CD4-positive, alpha-beta memory T cell (primary cell): ENCODE measurements at regions of chr7 and their contacts with region 1.

Region 1: DNA sequence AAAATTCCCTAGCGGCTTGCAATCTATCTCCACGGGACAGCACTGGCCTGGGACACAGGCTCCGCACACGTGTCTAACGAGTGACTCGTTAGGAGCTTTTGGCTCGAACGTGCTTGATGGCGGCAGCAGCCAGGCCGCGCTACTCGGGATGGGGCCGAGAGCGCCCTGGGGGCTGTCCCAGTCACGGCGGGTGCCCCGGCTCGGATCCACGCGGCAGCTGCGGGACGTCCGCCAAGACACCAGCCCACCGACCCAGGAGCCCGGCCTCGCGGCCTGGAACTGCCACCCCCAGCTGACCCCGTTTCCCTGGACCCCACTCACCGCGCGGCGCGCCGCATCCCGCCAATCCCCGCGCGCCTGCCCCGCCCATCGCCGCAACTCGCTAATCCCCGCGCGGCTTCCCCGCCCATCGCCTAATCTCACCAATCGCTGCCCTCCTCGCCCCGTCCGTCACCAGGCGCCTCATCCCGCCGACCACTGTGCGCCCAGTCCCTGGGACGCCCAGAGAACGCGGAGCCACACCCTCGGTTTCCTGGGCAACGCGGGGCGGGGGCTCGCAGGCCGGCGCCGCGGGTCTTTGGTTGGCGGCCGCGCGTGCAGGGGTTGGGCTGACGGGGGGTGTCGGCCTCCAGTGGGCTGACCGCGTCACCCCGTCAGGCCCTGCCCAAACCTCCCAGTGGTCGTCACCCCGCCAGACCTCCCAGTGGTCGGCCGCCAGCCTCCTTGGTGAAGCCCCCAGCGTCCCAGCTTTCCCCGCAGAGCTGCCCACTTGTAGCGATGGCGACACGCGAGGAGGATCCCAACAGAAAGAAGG is at the start of gene POLD2:
- DNase-seq: peak; percentile 95 to 97 (median 96)
- H3K4me3 ChIP-seq: peak within 1 kb of the TSS; percentile 72 to 78
- H3K4me3 Mint-ChIP-seq: peak within 1 kb of the TSS; percentile 87 to 95 (median 93)
- H3K27ac ChIP-seq: peak within 1 kb of the TSS; percentile 76
- H3K27ac Mint-ChIP-seq: peak within 1 kb of the TSS; percentile 90 to 97 (median 96)
- H3K4me1 ChIP-seq: peaks cover 22% of the 10 kb centered on the region
- H3K4me1 Mint-ChIP-seq: peaks cover 20 to 37% (median 27%) of the 10 kb centered on the region in 4 donors
- H3K27me3 ChIP-seq: no peaks in the 10 kb centered on the region
- H3K27me3 Mint-ChIP-seq: no peaks in the 10 kb centered on the region
- total RNA-seq, gene POLD2: 48.7 to 61.0 TPM

Region 2: GRCh38 chr7:43869006-43869866 is 254.2 kb before region 1 on chr7 and contains the start of gene MRPS24:
- CTCF ChIA-PET with region 1: no interaction called
- POLR2A ChIA-PET with region 1: interaction called, 5 read pairs
- intact Hi-C with region 1: loop called (anchors 5 kb)
- DNase-seq: peak; percentile 91 to 94 (median 91)
- H3K4me3 ChIP-seq: peak within 1 kb of the TSS; percentile 79 to 86
- H3K4me3 Mint-ChIP-seq: peak within 1 kb of the TSS; percentile 91 to 97 (median 93)
- H3K27ac ChIP-seq: peak within 1 kb of the TSS; percentile 54
- H3K27ac Mint-ChIP-seq: peak within 1 kb of the TSS; percentile 89 to 95 (median 94)
- H3K4me1 ChIP-seq: peaks cover 20% of the 10 kb centered on the region
- H3K4me1 Mint-ChIP-seq: peaks cover 8 to 31% (median 18%) of the 10 kb centered on the region in 4 donors
- H3K27me3 ChIP-seq: no peaks in the 10 kb centered on the region
- H3K27me3 Mint-ChIP-seq: no peaks in the 10 kb centered on the region
- total RNA-seq, gene MRPS24: 52.2 to 52.7 TPM

Region 3: GRCh38 chr7:44072364-44073231 is 50.8 kb before region 1 on chr7:
- CTCF ChIA-PET with region 1: no interaction called
- POLR2A ChIA-PET with region 1: no interaction called
- intact Hi-C with region 1: no loop called
- DNase-seq: peak in 2 of 5 donors; percentile 25 to 35
- H3K4me3 ChIP-seq: no peak overlapping the region
- H3K4me3 Mint-ChIP-seq: no peak overlapping the region
- H3K27ac ChIP-seq: no peak overlapping the region
- H3K27ac Mint-ChIP-seq: peak overlapping the region; percentile 7 to 71 (median 48)
- H3K4me1 ChIP-seq: no peaks in the 10 kb centered on the region
- H3K4me1 Mint-ChIP-seq: peaks cover 4 to 20% (median 11%) of the 10 kb centered on the region in 4 donors
- H3K27me3 ChIP-seq: no peaks in the 10 kb centered on the region
- H3K27me3 Mint-ChIP-seq: no peaks in the 10 kb centered on the region

Region 4: GRCh38 chr7:44103923-44104859 is 19.2 kb before region 1 on chr7 and contains the start of gene AEBP1:
- CTCF ChIA-PET with region 1: no interaction called
- POLR2A ChIA-PET with region 1: no interaction called
- intact Hi-C with region 1: loop called (anchors 2 kb)
- DNase-seq: peak in 1 of 5 donors; percentile 17
- H3K4me3 ChIP-seq: no peak within 1 kb of the TSS
- H3K4me3 Mint-ChIP-seq: peak within 1 kb of the TSS; percentile 60 to 79 (median 69)
- H3K27ac ChIP-seq: peak within 1 kb of the TSS; percentile 21
- H3K27ac Mint-ChIP-seq: peak within 1 kb of the TSS in 3 of 7 donors; percentile 11 to 55 (median 18)
- H3K4me1 ChIP-seq: peaks cover 5% of the 10 kb centered on the region
- H3K4me1 Mint-ChIP-seq: peaks cover 4 to 21% (median 7%) of the 10 kb centered on the region in 4 donors
- H3K27me3 ChIP-seq: peaks cover 7% of the 10 kb centered on the region
- H3K27me3 Mint-ChIP-seq: peaks cover 11 to 22% of the 10 kb centered on the region in 2 donors
- total RNA-seq, gene AEBP1: 7.8 TPM

Region 5: GRCh38 chr7:44145969-44146911 is 22.8 kb after region 1 on chr7:
- CTCF ChIA-PET with region 1: no interaction called
- POLR2A ChIA-PET with region 1: no interaction called
- intact Hi-C with region 1: loop called (anchors 2 kb)
- DNase-seq: peak; percentile 43 to 63 (median 48)
- H3K4me3 ChIP-seq: peak overlapping the region in 1 of 2 donors; percentile 51
- H3K4me3 Mint-ChIP-seq: peak overlapping the region; percentile 59 to 84 (median 77)
- H3K27ac ChIP-seq: peak overlapping the region; percentile 15
- H3K27ac Mint-ChIP-seq: peak overlapping the region in 3 of 7 donors; percentile 48 to 90 (median 78)
- H3K4me1 ChIP-seq: peaks cover 8% of the 10 kb centered on the region
- H3K4me1 Mint-ChIP-seq: peaks cover 1 to 14% (median 5%) of the 10 kb centered on the region in 4 donors
- H3K27me3 ChIP-seq: no peaks in the 10 kb centered on the region
- H3K27me3 Mint-ChIP-seq: peaks cover 2% of the 10 kb centered on the region in 2 donors

Region 6: DNA sequence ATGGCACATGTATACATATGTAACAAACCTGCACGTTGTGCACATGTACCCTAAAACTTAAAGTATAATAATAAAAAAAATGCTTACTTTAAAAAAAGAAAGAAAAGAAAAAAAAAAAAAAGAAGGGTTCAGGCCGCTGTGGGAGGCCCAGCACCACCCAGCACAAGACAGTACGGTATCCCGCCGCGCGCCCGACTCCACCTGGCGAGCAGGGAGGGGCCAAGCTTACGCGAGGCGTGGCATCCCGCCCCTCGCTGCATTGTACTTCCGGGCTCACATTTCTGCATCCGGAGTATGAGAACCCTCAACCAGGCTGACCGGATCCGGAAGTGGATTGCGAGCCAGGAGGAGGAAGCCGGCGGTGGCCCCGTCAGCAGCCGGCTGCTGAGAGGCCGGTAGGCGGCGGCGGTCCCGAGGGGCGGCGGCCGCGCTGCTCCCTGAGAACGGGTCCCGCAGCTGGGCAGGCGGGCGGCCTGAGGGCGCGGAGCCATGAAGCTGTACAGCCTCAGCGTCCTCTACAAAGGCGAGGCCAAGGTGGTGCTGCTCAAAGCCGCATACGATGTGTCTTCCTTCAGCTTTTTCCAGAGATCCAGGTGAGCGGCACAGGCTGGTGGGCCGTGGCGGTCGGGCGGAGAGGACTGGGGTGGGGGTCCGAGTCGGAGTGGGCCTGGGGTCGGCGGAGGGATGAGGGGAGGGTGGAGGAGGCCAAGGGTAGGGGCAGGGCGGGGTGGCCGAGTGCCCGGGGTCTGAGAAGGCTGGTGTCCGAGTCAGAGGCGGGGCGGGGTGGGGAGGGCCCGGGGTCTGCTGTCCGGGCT is 77.5 kb after region 1 on chr7 and contains the start of gene YKT6:
- CTCF ChIA-PET with region 1: interaction called, 3 read pairs
- POLR2A ChIA-PET with region 1: interaction called, 7 read pairs
- intact Hi-C with region 1: loop called (anchors 5 kb)
- DNase-seq: peak; percentile 91 to 96 (median 93)
- H3K4me3 ChIP-seq: peak within 1 kb of the TSS; percentile 12 to 84
- H3K4me3 Mint-ChIP-seq: peak within 1 kb of the TSS; percentile 77 to 90 (median 85)
- H3K27ac ChIP-seq: peak within 1 kb of the TSS; percentile 71
- H3K27ac Mint-ChIP-seq: peak within 1 kb of the TSS; percentile 49 to 88 (median 70)
- H3K4me1 ChIP-seq: peaks cover 17% of the 10 kb centered on the region
- H3K4me1 Mint-ChIP-seq: peaks cover 25 to 40% (median 35%) of the 10 kb centered on the region in 4 donors
- H3K27me3 ChIP-seq: no peaks in the 10 kb centered on the region
- H3K27me3 Mint-ChIP-seq: peaks cover 8 to 9% of the 10 kb centered on the region in 2 donors
- total RNA-seq, gene YKT6: 62.7 to 63.2 TPM

Region 7: DNA sequence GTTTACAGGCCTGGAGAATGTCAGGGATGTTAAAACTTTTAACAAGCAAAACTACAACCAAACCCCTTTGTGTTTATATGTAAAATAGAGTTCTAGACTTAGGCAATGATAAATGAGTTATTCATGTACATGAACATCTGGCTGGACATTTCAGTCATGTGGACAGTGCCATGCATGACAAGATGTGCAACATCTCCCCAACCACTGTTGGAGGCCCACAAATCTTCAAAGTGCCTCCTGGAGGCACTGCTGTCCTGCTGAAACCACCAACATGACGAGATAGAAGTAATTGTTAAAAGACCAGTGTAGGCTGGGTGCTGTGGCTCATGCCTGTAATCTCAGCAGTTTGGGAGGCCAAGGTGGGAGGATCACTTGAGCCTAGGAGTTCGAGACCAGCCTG is 691.5 kb after region 1 on chr7:
- CTCF ChIA-PET with region 1: no interaction called
- POLR2A ChIA-PET with region 1: no interaction called
- intact Hi-C with region 1: no loop called
- DNase-seq: no peak
- H3K4me3 ChIP-seq: no peak overlapping the region
- H3K4me3 Mint-ChIP-seq: no peak overlapping the region
- H3K27ac ChIP-seq: no peak overlapping the region
- H3K27ac Mint-ChIP-seq: peak overlapping the region in 1 of 7 donors; percentile 41
- H3K4me1 ChIP-seq: no peaks in the 10 kb centered on the region
- H3K4me1 Mint-ChIP-seq: no peaks in the 10 kb centered on the region
- H3K27me3 ChIP-seq: no peaks in the 10 kb centered on the region
- H3K27me3 Mint-ChIP-seq: no peaks in the 10 kb centered on the region